Right ventricle myocardium inferior (tissue), 1 donor: ENCODE measurements at regions of chr14 and their contacts with region 1.

Region 1: DNA sequence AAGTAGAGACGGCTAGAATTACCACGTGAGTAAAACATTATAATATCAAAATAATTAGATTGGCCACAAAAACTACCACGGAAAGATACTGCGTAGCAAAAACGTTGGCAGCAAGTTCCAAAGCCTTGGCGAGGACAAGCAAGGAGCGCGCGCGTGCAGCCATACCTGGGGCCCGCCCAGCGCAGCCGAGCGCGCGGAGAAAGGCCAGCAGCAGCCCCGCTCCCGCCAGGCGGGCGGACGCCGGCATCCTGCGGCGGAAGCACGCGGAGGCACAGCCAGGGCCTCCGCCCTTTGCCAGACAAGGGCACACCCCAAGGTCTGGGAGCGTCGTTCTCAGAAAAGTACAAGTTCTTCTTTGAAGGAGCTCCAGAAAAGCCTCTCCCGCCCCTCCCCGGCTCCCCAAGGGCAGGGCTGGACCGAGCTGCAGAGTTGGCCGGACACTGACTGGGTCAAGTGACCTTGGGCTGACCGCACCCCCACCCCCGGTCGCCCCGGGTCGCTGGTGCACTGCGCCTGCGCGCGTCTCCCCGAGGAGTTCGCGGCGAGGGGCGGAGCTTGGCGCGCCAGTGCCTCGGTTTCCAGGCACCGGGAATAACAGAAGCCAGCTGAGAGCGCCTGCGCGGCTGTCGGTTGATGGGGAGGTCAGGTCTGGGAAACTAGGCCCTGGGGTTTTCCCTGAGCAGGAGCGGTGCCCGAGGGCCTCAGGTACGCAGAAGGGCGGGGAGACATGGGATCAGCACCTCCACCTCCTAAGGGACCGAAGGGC is at the start of gene ZC2HC1C:
- DNase-seq: peak; percentile 98
- ATAC-seq: peak; percentile 97
- total RNA-seq, gene ZC2HC1C: 11.4 TPM

Region 2: DNA sequence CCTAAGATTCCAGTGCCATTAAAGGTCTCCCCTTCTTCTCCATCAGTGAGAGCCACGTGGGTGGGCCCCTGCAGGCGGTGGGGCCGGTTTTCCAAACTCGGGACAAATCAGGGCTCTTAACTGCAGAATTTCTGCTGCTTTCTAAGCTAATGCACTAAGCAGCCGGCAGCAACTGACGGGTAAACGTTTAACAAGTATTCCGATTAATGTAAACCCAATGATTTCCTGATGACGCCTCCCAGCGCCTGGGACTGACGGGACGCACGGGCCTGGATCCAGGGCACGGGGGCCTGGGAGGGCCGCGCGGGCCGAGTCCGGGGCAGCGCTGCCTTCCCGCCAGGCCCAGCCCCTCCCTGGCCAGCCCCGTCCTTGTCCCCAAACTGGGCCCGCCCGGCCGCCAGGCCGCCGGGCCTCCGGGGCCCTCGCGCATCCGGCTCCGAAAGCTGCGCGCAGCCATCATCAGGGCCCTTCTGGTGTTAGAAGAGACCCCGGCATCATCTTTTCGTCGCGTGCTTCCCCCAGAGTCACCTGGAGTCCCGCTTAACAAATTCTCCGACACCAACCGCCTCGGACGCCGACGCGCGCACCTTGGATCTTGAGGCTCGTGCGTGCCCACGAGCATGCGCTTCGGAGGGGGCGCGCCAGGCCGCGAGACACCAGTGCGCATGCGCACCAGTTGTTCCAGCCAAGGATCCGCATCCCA is 18.2 kb before region 1 on chr14 and contains the start of gene MLH3:
- intact Hi-C with region 1: loop called (anchors 2 kb)
- DNase-seq: peak; percentile 92
- ATAC-seq: peak; percentile 86
- total RNA-seq, gene MLH3: 20.2 TPM